SK-N-SH (cell line): ENCODE measurements at regions of chr5 and their contacts with region 1.

Region 1: DNA sequence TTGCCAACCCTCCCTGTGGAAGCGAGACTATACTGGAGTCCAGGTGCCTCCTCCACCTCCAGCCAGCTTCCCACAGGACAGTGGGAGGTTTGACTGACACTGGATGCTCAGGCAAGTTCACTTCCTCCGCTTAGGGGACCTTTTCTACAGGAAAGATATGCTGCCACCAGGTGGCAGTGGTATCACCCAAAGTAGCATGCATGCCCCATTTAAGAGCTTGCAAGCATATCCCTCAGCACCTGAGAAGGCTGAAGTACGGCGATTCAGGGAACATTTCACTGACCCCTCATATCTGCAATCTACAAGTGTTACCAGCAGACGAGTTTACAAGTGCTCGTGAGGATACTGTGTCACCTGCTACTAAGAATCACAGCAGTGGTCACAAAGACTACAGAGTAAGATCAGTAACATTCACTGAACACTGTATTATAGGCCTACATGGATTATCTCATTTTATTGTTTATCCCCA is 75.5 kb downstream of the KLHL3 start:
- DNase-seq: peak; percentile 64
- H3K4me3 ChIP-seq: no peak overlapping the region
- H3K27ac ChIP-seq: no peak overlapping the region
- H3K4me1 ChIP-seq: peaks cover 0 to 2% of the 10 kb centered on the region in 2 experiments; a peak in 1 of 4 replicates
- H3K27me3 ChIP-seq: no peaks in the 10 kb centered on the region
- CTCF ChIP-seq: peak; percentile 78
- EP300 ChIP-seq: no peak
- RAD21 ChIP-seq: peak; percentile 82

Region 2: DNA sequence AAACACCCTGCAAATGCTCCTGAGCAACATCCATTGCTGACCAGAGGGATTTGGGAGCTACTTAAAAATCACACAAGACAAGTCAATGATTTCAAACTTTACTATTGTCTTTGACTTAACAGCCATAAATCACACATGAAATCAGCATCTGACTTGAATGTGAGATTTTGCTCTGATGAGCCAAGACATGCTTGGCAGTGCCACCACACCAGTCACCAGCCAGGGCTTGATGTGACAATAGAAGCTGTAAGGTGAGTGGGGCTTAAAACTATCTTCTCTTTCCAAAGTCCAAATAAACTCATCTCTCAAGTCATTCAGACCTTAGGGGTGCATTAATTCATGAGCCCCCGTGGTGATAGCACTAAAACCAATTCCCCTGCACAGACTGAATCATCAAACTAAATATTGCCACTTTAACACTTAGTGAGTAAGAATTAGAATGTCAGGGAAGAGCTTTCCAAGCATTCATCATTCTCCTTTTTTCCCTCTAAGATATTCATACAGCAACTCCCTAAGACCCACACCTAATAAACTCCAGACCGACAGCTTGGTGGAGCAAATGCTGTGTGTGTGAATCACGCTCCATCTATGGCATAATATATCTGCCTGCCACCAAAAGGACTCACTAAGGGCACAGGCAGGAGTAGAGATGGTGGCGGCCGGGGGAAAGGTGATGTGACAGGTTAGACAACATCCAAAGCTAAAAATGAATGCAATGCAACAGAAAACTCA is 280.7 kb before region 1 on chr5:
- CTCF ChIA-PET with region 1: no interaction called
- POLR2A ChIA-PET with region 1: no interaction called
- DNase-seq: no peak
- H3K4me3 ChIP-seq: no peak overlapping the region
- H3K27ac ChIP-seq: no peak overlapping the region
- H3K4me1 ChIP-seq: peaks cover 0 to 19% of the 10 kb centered on the region in 2 experiments; a peak in 2 of 4 replicates
- H3K27me3 ChIP-seq: no peaks in the 10 kb centered on the region
- CTCF ChIP-seq: no peak
- EP300 ChIP-seq: no peak
- RAD21 ChIP-seq: no peak

Region 3: GRCh38 chr5:137619191-137619870 is 41.1 kb before region 1 on chr5:
- CTCF ChIA-PET with region 1: interaction called, 17 read pairs
- POLR2A ChIA-PET with region 1: no interaction called
- DNase-seq: peak; percentile 86
- H3K4me3 ChIP-seq: peak overlapping the region in 1 of 2 experiments; percentile 23; a peak in 1 of 4 replicates
- H3K27ac ChIP-seq: peak overlapping the region; percentile 69 to 83
- H3K4me1 ChIP-seq: peaks cover 16 to 27% of the 10 kb centered on the region in 2 experiments; a peak in 3 of 4 replicates
- H3K27me3 ChIP-seq: no peaks in the 10 kb centered on the region
- CTCF ChIP-seq: no peak
- EP300 ChIP-seq: peak in 1 of 2 experiments; percentile 81; a peak in 2 of 4 replicates
- RAD21 ChIP-seq: no peak; the same call in 1 of the 2 replicates

Region 4: DNA sequence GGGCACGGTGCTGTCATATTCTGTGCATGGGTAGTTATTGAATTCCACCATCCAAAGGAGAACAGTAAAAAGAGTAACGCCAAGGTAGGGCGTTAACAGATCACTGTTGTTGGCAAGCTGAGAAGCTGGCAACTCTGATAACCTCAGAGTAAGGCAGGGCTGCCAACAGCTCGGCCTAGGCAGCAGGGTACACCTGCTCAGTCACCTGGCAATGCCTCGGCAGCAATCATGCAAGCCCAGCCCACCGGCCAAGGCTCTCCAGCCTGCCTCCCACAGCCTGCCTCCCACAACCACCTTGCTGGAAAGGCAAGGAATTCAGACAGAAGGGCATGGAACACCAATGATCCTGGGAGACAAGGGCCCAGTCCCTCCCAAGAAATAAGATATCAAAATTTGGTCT is 11.6 kb after region 1 on chr5:
- CTCF ChIA-PET with region 1: interaction called, 57 read pairs
- POLR2A ChIA-PET with region 1: no interaction called
- DNase-seq: no peak
- H3K4me3 ChIP-seq: no peak overlapping the region
- H3K27ac ChIP-seq: no peak overlapping the region
- H3K4me1 ChIP-seq: no peaks in the 10 kb centered on the region; a peak in 2 of 4 replicates
- H3K27me3 ChIP-seq: no peaks in the 10 kb centered on the region
- CTCF ChIP-seq: no peak
- EP300 ChIP-seq: no peak
- RAD21 ChIP-seq: no peak

Region 5: GRCh38 chr5:137688210-137688840 is 27.9 kb after region 1 on chr5:
- CTCF ChIA-PET with region 1: interaction called, 17 read pairs
- POLR2A ChIA-PET with region 1: no interaction called
- DNase-seq: no peak
- H3K4me3 ChIP-seq: no peak overlapping the region
- H3K27ac ChIP-seq: no peak overlapping the region
- H3K4me1 ChIP-seq: no peaks in the 10 kb centered on the region; a peak in 1 of 4 replicates
- H3K27me3 ChIP-seq: no peaks in the 10 kb centered on the region
- CTCF ChIP-seq: no peak
- EP300 ChIP-seq: no peak
- RAD21 ChIP-seq: no peak

Region 6: GRCh38 chr5:137708796-137709559 is 48.6 kb after region 1 on chr5:
- CTCF ChIA-PET with region 1: interaction called, 22 read pairs
- POLR2A ChIA-PET with region 1: no interaction called
- DNase-seq: no peak
- H3K4me3 ChIP-seq: no peak overlapping the region
- H3K27ac ChIP-seq: no peak overlapping the region
- H3K4me1 ChIP-seq: no peaks in the 10 kb centered on the region; a peak in 1 of 4 replicates
- H3K27me3 ChIP-seq: no peaks in the 10 kb centered on the region
- CTCF ChIP-seq: no peak
- EP300 ChIP-seq: no peak
- RAD21 ChIP-seq: no peak

Region 7: DNA sequence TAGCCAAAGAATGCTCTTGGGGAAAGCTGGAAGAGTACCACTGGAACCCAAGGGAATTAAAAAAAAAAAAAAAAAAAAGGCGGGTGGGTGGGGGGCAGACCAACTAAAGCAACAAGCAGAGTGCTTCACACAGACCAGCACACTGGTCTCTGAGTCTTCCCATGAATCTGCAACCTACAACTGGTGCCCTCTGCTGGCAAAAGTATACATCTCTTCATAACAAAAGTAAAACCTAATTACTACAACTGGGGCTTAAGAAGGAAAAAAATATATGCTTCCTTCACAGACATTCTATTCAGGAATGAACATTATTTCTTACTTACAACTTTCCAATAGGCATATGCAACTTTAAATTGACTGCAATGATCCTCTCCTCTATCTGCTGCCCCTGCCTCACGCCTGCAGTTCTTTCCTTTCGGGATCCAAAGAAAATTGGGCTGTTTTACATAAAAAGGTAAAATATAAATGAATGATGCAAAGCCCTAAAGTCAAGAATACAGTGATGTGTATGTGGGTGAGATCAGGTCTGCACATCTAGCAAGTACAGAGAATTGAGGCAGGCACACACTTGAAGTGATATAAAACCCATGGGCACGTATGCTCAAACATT is 82.8 kb after region 1 on chr5:
- CTCF ChIA-PET with region 1: interaction called, 239 read pairs
- POLR2A ChIA-PET with region 1: no interaction called
- DNase-seq: peak; percentile 50
- H3K4me3 ChIP-seq: no peak overlapping the region
- H3K27ac ChIP-seq: no peak overlapping the region
- H3K4me1 ChIP-seq: no peaks in the 10 kb centered on the region
- H3K27me3 ChIP-seq: no peaks in the 10 kb centered on the region
- CTCF ChIP-seq: peak; percentile 74
- EP300 ChIP-seq: no peak
- RAD21 ChIP-seq: peak; percentile 80